ENCODE measurements at regions of chr6 and their contacts with region 1.

Region 1: DNA sequence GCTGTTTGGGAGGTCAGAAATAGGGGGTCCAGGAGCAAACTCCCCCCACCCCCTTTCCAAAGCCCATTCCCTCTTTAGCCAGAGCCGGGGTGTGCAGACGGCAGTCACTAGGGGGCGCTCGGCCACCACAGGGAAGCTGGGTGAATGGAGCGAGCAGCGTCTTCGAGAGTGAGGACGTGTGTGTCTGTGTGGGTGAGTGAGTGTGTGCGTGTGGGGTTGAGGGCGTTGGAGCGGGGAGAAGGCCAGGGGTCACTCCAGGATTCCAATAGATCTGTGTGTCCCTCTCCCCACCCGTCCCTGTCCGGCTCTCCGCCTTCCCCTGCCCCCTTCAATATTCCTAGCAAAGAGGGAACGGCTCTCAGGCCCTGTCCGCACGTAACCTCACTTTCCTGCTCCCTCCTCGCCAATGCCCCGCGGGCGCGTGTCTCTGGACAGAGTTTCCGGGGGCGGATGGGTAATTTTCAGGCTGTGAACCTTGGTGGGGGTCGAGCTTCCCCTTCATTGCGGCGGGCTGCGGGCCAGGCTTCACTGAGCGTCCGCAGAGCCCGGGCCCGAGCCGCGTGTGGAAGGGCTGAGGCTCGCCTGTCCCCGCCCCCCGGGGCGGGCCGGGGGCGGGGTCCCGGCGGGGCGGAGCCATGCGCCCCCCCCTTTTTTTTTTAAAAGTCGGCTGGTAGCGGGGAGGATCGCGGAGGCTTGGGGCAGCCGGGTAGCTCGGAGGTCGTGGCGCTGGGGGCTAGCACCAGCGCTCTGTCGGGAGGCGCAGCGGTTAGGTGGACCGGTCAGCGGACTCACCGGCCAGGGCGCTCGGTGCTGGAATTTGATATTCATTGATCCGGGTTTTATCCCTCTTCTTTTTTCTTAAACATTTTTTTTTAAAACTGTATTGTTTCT is at the start of gene VEGFA:
- DNase-seq: peak; percentile 94
- ATAC-seq: peak; percentile 73
- H3K4me3 Mint-ChIP-seq: peak within 1 kb of the TSS; percentile 97
- H3K27ac Mint-ChIP-seq: peak within 1 kb of the TSS; percentile 93
- H3K4me1 Mint-ChIP-seq: peaks cover 24% of the 10 kb centered on the region
- H3K27me3 Mint-ChIP-seq: peaks cover 2% of the 10 kb centered on the region
- CTCF ChIP-seq: peak; percentile 98
- total RNA-seq, gene VEGFA: 93.7 to 104 TPM

Region 2: DNA sequence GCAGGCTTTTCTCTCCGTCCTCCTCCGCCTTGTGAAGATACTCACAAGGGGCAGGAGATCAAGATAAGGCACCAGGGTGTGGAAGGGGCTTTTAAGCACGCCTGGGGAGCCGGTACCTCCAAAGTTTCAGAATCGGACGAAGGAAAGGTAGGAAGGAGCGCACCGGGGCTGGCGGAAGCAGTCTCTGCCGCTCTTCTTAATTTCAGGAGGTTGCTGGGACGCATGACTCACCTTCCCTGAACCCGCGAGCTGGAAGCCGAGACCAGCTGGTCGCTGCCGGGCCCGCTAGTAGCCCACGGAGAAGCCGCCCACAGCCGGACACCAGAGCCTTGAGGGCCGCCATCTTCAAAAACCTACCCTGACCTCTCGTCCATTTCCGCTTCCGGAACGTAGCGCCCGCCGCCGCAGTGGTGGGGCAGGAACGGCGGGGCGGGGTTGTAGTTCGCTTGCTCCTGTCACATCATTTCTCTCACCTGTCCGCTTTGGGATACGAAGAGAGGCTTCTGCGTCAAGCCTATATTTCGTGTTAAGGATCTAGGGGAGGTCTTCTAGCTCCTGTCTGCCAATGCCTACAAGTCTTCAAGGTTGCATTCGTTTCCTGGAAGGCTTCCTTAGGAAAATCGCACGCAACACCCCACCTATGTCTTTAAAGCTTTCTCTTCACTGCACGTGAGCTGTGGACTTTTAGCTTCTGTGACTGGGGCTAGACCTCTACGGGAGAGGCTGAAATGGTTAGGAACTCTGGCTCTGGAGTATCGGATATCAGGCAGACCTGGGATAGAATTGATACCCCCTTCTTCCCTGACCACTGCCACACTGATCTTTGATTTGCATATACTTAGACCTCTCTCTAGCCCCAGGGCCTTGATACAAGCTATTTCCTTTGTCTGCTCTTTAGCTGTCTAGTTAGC is 82.1 kb before region 1 on chr6 and contains the start of gene MRPS18A:
- CTCF ChIA-PET with region 1: interaction called, 12 read pairs
- POLR2A ChIA-PET with region 1: interaction called, 6 read pairs
- intact Hi-C with region 1: no loop called
- DNase-seq: peak; percentile 91
- ATAC-seq: peak; percentile 97
- H3K4me3 Mint-ChIP-seq: peak within 1 kb of the TSS; percentile 90
- H3K27ac Mint-ChIP-seq: peak within 1 kb of the TSS; percentile 93
- H3K4me1 Mint-ChIP-seq: peaks cover 41% of the 10 kb centered on the region
- H3K27me3 Mint-ChIP-seq: no peaks in the 10 kb centered on the region
- CTCF ChIP-seq: no peak
- total RNA-seq, gene MRPS18A: 45.4 to 52.9 TPM

Region 3: GRCh38 chr6:43737272-43738081 is 32.3 kb before region 1 on chr6:
- CTCF ChIA-PET with region 1: interaction called, 11 read pairs
- POLR2A ChIA-PET with region 1: interaction called, 7 read pairs
- intact Hi-C with region 1: no loop called
- DNase-seq: no peak
- ATAC-seq: no peak
- H3K4me3 Mint-ChIP-seq: no peak overlapping the region
- H3K27ac Mint-ChIP-seq: no peak overlapping the region
- H3K4me1 Mint-ChIP-seq: peaks cover 14% of the 10 kb centered on the region
- H3K27me3 Mint-ChIP-seq: no peaks in the 10 kb centered on the region
- CTCF ChIP-seq: no peak

Region 4: DNA sequence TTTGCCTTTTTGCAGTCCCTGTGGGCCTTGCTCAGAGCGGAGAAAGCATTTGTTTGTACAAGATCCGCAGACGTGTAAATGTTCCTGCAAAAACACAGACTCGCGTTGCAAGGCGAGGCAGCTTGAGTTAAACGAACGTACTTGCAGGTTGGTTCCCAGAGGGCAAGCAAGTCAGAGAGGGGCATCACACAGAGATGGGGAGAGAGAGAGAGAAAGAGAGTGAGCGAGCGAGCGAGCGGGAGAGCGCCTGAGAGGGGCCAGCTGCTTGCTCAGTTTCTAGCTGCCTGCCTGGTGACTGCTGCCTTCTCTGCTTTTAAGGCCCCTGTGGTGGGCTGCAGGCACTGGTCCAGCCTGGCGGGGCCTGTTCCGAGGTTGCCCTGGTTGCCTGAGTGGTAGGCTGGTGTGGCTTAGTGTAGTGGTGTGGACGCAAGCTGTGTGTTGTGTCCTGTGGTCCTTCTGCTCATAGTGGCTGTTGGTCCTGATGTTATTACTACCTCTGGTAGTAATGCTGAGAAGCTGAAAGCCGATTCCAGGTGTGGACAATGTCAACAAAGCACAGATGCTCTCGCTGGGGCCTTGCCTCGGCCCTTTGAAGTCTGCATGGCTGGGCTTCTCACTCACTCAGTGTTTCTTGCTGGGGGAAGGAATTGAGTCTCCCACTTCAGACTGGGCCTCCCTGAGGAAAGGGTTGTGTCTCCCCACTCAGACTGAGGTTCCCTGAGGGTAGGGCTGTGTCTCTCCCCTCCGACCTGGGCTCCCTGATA is 12.4 kb after region 1 on chr6:
- CTCF ChIA-PET with region 1: interaction called, 11 read pairs
- POLR2A ChIA-PET with region 1: interaction called, 3 read pairs
- intact Hi-C with region 1: no loop called
- DNase-seq: no peak
- ATAC-seq: no peak
- H3K4me3 Mint-ChIP-seq: no peak overlapping the region
- H3K27ac Mint-ChIP-seq: no peak overlapping the region
- H3K4me1 Mint-ChIP-seq: no peaks in the 10 kb centered on the region
- H3K27me3 Mint-ChIP-seq: no peaks in the 10 kb centered on the region
- CTCF ChIP-seq: no peak

Region 5: GRCh38 chr6:43823879-43824702 is 54.3 kb after region 1 on chr6:
- CTCF ChIA-PET with region 1: no interaction called
- POLR2A ChIA-PET with region 1: no interaction called
- intact Hi-C with region 1: no loop called
- DNase-seq: no peak
- ATAC-seq: no peak
- H3K4me3 Mint-ChIP-seq: no peak overlapping the region
- H3K27ac Mint-ChIP-seq: no peak overlapping the region
- H3K4me1 Mint-ChIP-seq: no peaks in the 10 kb centered on the region
- H3K27me3 Mint-ChIP-seq: peaks cover 5% of the 10 kb centered on the region
- CTCF ChIP-seq: no peak

Region 6: DNA sequence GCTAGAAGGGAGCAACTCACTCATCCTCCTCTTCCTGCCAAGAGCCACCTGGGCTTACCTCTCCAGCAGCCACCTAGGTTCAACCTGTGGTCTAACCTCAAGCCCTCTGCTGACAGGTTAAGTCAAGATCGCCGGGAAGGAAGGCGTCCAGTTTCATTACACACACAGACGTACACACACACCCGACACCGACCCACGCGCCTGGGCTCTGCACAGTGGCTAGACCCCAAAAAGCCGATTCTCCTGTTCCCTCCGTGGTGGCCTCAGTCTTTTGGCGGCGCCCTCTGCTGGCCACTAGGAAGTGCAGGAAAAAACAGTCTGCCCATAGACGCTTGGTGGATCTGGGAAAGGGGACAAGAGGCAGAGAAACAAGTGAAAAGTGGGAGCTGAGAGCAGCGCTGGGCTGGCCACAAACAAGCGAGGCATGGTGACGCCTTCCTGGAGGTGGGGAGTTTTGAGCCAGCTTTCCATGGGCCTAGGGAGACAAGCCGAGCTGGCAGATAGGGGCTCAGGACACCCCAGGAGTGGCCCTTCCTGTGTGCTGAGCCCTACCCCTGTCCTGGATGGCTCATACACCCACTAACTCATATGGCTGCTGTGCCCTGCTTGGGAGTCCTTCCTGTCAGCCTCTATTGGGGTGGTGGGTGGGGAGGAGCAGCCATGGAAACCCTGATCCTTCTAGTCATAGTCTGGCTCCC is 304.8 kb after region 1 on chr6:
- CTCF ChIA-PET with region 1: interaction called, 81 read pairs
- POLR2A ChIA-PET with region 1: interaction called, 13 read pairs
- intact Hi-C with region 1: loop called (anchors 2 kb)
- DNase-seq: peak; percentile 96
- ATAC-seq: peak; percentile 71
- H3K4me3 Mint-ChIP-seq: peak overlapping the region; percentile 98
- H3K27ac Mint-ChIP-seq: peak overlapping the region; percentile 90
- H3K4me1 Mint-ChIP-seq: peaks cover 25% of the 10 kb centered on the region
- H3K27me3 Mint-ChIP-seq: peaks cover 16% of the 10 kb centered on the region
- CTCF ChIP-seq: peak; percentile 89

Measured in activated CD8-positive, alpha-beta T cell treated with anti-CD3 and anti-CD28 coated beads for 36 hours (primary cell).